ENCODE measurements at regions of chr2 and their contacts with region 1.

Region 1: DNA sequence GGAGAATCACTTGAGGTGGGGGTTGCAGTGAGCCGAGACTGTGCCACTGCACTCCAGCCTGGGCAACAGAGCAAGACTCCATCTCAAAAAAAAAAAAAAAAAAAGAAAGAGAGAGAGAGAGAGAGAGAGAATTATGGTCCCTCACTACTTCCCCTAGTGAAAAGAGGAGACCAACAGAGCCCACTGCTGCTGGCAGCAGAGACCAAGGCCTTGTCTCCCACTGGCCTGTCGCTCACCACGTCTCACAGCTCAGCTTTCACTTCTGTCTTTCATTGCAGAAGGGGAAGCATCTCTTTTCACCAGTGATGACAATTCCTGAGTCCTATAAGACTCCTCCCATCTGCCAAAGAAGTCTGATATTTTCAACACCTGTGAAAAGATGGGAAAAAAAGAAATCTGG is 81.3 kb downstream of the CLHC1 start:
- DNase-seq: peak; percentile 64
- CTCF ChIP-seq: no peak

Region 2: GRCh38 chr2:55175254-55176025 is 24.6 kb after region 1 on chr2:
- CTCF ChIA-PET with region 1: interaction called, 56 read pairs
- POLR2A ChIA-PET with region 1: no interaction called
- DNase-seq: peak; percentile 58
- CTCF ChIP-seq: peak; percentile 52

Measured in GM10248 (cell line).